ENCODE measurements at regions of chr1 and their contacts with region 1.

Region 1: DNA sequence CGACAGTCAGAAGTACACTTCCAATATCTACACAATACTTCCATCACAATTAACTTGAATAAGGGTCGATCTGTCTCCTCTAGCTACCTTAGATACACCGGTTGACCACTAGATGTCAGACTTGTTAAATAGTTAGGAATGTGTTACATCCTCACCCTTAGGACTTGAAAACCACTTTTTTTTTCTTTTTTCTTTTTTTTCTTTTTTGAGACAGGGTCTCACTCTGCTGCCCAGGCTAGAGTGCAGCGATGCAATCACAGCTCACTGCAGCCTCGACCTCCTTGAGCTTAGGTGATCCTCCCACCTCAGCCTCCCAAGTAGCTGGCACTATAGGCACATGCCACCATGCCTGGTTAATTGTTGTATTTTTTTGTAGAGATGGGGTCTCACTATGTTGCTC is 120.4 kb upstream of the GREM2 start:
- DNase-seq: no peak
- H3K4me3 ChIP-seq: no peak overlapping the region
- H3K27ac ChIP-seq: no peak overlapping the region
- H3K4me1 ChIP-seq: no peaks in the 10 kb centered on the region
- H3K27me3 ChIP-seq: no peaks in the 10 kb centered on the region
- CTCF ChIP-seq: peak in 2 of 3 experiments; percentile 35 to 74; a peak in 2 of 4 replicates
- EP300 ChIP-seq: no peak
- POLR2A ChIP-seq: no peak
- RAD21 ChIP-seq: peak; percentile 79 to 83

Region 2: DNA sequence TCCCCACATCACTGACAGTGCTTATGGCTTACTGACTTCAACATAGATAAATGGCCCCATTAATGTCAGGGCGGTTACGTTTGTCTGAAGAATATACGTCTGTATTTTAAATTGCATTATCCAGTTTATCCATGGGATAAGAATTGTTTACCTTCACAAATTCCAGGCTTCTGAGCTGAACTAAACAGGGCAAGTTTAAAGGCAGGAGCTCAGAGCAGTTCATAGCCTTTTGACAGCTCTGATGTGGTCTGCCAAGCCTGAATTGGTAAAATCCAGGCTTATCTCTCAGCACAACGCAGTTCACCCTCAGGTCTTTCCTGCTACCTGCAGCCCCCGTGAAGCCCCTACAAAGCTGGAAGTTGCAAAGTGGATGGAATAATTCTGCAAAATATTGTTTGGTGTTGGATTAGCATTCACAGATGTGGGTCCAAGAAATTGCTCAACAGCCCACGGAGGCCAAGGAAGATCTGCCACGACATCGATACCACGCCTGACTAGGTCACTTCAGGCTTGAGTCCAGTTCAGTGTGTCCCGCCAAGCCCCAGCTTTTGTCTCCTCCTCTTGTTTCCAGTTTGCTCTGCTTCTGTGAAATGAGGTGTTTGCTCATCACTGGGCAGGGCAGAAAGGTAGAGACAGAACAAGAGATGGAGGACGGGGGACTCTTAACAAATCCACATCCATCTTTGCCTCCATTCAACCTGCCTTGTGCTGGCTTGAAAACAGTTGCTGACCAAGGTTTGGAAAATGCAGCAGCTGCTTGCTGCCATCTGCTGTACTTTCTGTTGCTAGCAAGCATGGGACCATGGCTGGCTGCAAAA is 40.7 kb before region 1 on chr1:
- CTCF ChIA-PET with region 1: interaction called, 12 read pairs
- POLR2A ChIA-PET with region 1: no interaction called
- DNase-seq: peak; percentile 27 to 55
- H3K4me3 ChIP-seq: no peak overlapping the region
- H3K27ac ChIP-seq: no peak overlapping the region
- H3K4me1 ChIP-seq: no peaks in the 10 kb centered on the region
- H3K27me3 ChIP-seq: no peaks in the 10 kb centered on the region
- CTCF ChIP-seq: peak; percentile 51 to 86 (median 84)
- EP300 ChIP-seq: no peak
- POLR2A ChIP-seq: no peak
- RAD21 ChIP-seq: peak; percentile 95 to 97

Region 3: GRCh38 chr1:240743696-240744095 is 11.3 kb after region 1 on chr1:
- CTCF ChIA-PET with region 1: interaction called, 24 read pairs
- POLR2A ChIA-PET with region 1: no interaction called
- DNase-seq: no peak
- H3K4me3 ChIP-seq: no peak overlapping the region
- H3K27ac ChIP-seq: no peak overlapping the region
- H3K4me1 ChIP-seq: 0 out of 7 replicates have a peak, but pooled peaks cover 0 to 4% (median 0%) of the 10 kb centered on the region in 4 experiments
- H3K27me3 ChIP-seq: no peaks in the 10 kb centered on the region
- CTCF ChIP-seq: no peak
- EP300 ChIP-seq: no peak
- POLR2A ChIP-seq: no peak
- RAD21 ChIP-seq: no peak

Region 4: GRCh38 chr1:240888039-240888786 is 155.8 kb after region 1 on chr1:
- CTCF ChIA-PET with region 1: interaction called, 10 read pairs
- POLR2A ChIA-PET with region 1: no interaction called
- DNase-seq: peak; percentile 46 to 87
- H3K4me3 ChIP-seq: no peak overlapping the region
- H3K27ac ChIP-seq: no peak overlapping the region
- H3K4me1 ChIP-seq: peaks cover 0 to 6% (median 0%) of the 10 kb centered on the region in 4 experiments; a peak in 1 of 7 replicates
- H3K27me3 ChIP-seq: no peaks in the 10 kb centered on the region
- CTCF ChIP-seq: peak; percentile 80 to 89 (median 86)
- EP300 ChIP-seq: no peak
- POLR2A ChIP-seq: no peak
- RAD21 ChIP-seq: peak; percentile 99 to 100